ENCODE measurements at regions of chr1 and their contacts with region 1.

Region 1: DNA sequence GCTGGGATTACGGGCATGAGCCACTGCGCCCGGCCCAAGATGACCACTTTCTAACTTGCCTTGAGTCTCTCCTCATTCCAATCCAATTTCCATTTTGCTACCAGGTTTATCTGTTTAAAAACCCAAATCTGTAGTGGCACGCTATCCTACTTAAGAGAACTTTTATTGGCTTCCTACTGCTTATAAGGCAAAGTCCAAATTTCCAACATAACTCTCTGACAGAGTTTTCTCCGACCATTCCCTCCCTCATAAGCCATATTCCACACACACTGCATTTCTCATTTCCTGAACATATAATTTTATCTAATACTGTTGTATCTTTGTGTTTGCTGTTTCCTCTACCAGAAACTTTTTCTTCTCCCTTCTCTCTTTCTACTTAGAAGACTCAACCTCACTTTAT is 15.3 kb downstream of the SF3A3 start:
- DNase-seq: no peak
- H3K4me3 ChIP-seq: no peak overlapping the region
- H3K27ac ChIP-seq: no peak overlapping the region
- H3K4me1 ChIP-seq: peaks cover 0 to 6% (median 0%) of the 10 kb centered on the region in 6 donors
- H3K27me3 ChIP-seq: no peaks in the 10 kb centered on the region
- CTCF ChIP-seq: no peak
- POLR2A ChIP-seq: no peak

Region 2: GRCh38 chr1:37890378-37891014 is 84.1 kb before region 1 on chr1:
- intact Hi-C with region 1: loop called (anchors 2 kb)
- DNase-seq: no peak
- H3K4me3 ChIP-seq: no peak overlapping the region
- H3K27ac ChIP-seq: peak overlapping the region in 3 of 8 donors; percentile 10 to 43 (median 35)
- H3K4me1 ChIP-seq: peaks cover 0 to 19% (median 5%) of the 10 kb centered on the region in 6 donors
- H3K27me3 ChIP-seq: no peaks in the 10 kb centered on the region
- CTCF ChIP-seq: peak; percentile 41 to 67 (median 59)
- POLR2A ChIP-seq: no peak

Measured in spleen (tissue), 13 donors.